Caco-2 (cell line): ENCODE measurements at regions of chr4 and their contacts with region 1.

Region 1: DNA sequence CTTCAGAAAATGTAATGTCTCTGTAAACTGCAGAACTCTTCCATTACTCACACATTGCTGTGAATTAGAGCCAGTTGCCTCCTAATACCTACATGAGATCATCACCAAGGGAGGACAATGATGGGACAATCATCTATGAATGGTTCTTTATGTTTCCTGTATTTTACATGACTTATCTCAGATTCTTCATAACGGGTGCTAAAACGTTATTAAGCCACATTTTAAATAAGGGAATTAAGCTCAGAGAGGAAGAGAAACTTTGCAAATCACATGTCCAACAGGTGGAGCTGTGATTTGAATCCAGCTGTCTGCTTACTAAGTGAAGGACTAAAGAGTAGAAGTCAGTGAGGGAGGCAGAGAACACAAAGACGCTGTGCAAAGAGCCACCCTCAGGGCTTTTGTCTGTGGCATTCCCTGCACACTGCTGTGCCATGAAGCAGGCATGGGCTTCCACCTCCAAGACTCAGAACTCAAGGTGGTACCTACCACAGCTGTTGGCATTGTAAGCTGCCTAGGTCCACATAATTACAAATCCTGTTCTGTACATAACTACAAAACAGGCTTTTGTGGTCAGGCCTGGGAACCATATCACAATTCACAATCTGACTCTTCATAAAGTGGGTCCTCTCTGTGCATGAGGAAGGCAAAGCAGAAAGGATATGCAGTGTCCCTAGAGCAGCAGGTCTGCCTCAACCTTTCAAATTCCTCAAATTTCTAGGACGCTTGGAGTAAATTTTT is 12.8 kb downstream of the TBC1D9 start:
- DNase-seq: peak in 1 of 2 experiments; percentile 27
- H3K4me3 ChIP-seq: no peak overlapping the region
- H3K4me3 Mint-ChIP-seq: no peak overlapping the region
- H3K27ac Mint-ChIP-seq: peak overlapping the region; percentile 67
- H3K4me1 ChIP-seq: peaks cover 44% of the 10 kb centered on the region
- H3K4me1 Mint-ChIP-seq: peaks cover 28% of the 10 kb centered on the region
- H3K27me3 ChIP-seq: no peaks in the 10 kb centered on the region
- H3K27me3 Mint-ChIP-seq: no peaks in the 10 kb centered on the region
- CTCF ChIP-seq: no peak

Region 2: GRCh38 chr4:140680686-140681085 is 62.7 kb before region 1 on chr4:
- CTCF ChIA-PET with region 1: no interaction called
- POLR2A ChIA-PET with region 1: no interaction called
- intact Hi-C with region 1: loop called (anchors 5 kb)
- DNase-seq: no peak
- H3K4me3 ChIP-seq: no peak overlapping the region
- H3K4me3 Mint-ChIP-seq: no peak overlapping the region
- H3K27ac Mint-ChIP-seq: no peak overlapping the region
- H3K4me1 ChIP-seq: no peaks in the 10 kb centered on the region
- H3K4me1 Mint-ChIP-seq: no peaks in the 10 kb centered on the region
- H3K27me3 ChIP-seq: no peaks in the 10 kb centered on the region
- H3K27me3 Mint-ChIP-seq: no peaks in the 10 kb centered on the region
- CTCF ChIP-seq: no peak

Region 3: DNA sequence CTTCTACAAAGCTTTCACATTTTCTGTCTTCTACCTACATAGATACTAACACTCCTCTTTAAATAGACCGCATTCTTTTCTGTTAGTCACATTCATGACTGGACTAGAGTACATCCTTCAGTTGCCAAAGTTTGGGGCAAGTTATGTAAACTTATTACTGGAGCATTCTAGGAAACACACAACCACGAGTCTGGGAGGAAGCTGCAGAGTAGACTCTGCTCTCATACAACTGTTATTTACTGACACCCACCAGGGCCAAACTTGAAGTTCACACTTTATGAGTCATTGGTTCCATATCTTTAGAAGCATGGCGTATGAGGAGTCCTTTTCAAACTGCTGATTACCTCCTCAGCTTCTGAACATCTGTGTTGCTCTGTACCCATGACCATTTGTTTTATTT is 302.9 kb after region 1 on chr4:
- CTCF ChIA-PET with region 1: no interaction called
- POLR2A ChIA-PET with region 1: no interaction called
- intact Hi-C with region 1: no loop called
- DNase-seq: no peak
- H3K4me3 ChIP-seq: no peak overlapping the region
- H3K4me3 Mint-ChIP-seq: no peak overlapping the region
- H3K27ac Mint-ChIP-seq: no peak overlapping the region
- H3K4me1 ChIP-seq: no peaks in the 10 kb centered on the region; the same call in 1 of the 2 replicates
- H3K4me1 Mint-ChIP-seq: peaks cover 3% of the 10 kb centered on the region
- H3K27me3 ChIP-seq: no peaks in the 10 kb centered on the region
- H3K27me3 Mint-ChIP-seq: peaks cover under 1% of the 10 kb centered on the region
- CTCF ChIP-seq: no peak